Activated CD8-positive, alpha-beta T cell treated with anti-CD3 and anti-CD28 coated beads for 36 hours (primary cell): ENCODE measurements at regions of chr17 and their contacts with region 1.

Region 1: GRCh38 chr17:48024937-48025906 is 12.4 kb downstream of the COPZ2 start:
- DNase-seq: peak; percentile 98
- ATAC-seq: peak; percentile 90
- H3K4me3 Mint-ChIP-seq: peak overlapping the region; percentile 79
- H3K27ac Mint-ChIP-seq: no peak overlapping the region
- H3K4me1 Mint-ChIP-seq: peaks cover 28% of the 10 kb centered on the region
- H3K27me3 Mint-ChIP-seq: peaks cover 29% of the 10 kb centered on the region
- CTCF ChIP-seq: peak; percentile 74

Region 2: GRCh38 chr17:47855737-47856136 is 169.5 kb before region 1 on chr17:
- CTCF ChIA-PET with region 1: no interaction called
- POLR2A ChIA-PET with region 1: no interaction called
- intact Hi-C with region 1: no loop called
- DNase-seq: no peak
- ATAC-seq: no peak
- H3K4me3 Mint-ChIP-seq: no peak overlapping the region
- H3K27ac Mint-ChIP-seq: no peak overlapping the region
- H3K4me1 Mint-ChIP-seq: peaks cover 13% of the 10 kb centered on the region
- H3K27me3 Mint-ChIP-seq: peaks cover 53% of the 10 kb centered on the region
- CTCF ChIP-seq: no peak

Region 3: GRCh38 chr17:48011405-48012150 is 13.6 kb before region 1 on chr17:
- CTCF ChIA-PET with region 1: interaction called, 18 read pairs
- POLR2A ChIA-PET with region 1: no interaction called
- intact Hi-C with region 1: no loop called
- DNase-seq: peak; percentile 68
- ATAC-seq: peak; percentile 88
- H3K4me3 Mint-ChIP-seq: peak overlapping the region; percentile 55
- H3K27ac Mint-ChIP-seq: no peak overlapping the region
- H3K4me1 Mint-ChIP-seq: peaks cover 12% of the 10 kb centered on the region
- H3K27me3 Mint-ChIP-seq: peaks cover 48% of the 10 kb centered on the region
- CTCF ChIP-seq: peak; percentile 62

Region 4: GRCh38 chr17:48047741-48048383 is 22.6 kb after region 1 on chr17 and contains the start of gene NFE2L1:
- CTCF ChIA-PET with region 1: interaction called, 101 read pairs
- POLR2A ChIA-PET with region 1: interaction called, 10 read pairs
- intact Hi-C with region 1: no loop called
- DNase-seq: peak; percentile 100
- ATAC-seq: peak; percentile 97
- H3K4me3 Mint-ChIP-seq: peak within 1 kb of the TSS; percentile 96
- H3K27ac Mint-ChIP-seq: peak within 1 kb of the TSS; percentile 98
- H3K4me1 Mint-ChIP-seq: peaks cover 57% of the 10 kb centered on the region
- H3K27me3 Mint-ChIP-seq: no peaks in the 10 kb centered on the region
- CTCF ChIP-seq: no peak
- total RNA-seq, gene NFE2L1: 88.3 to 90.3 TPM

Region 5: DNA sequence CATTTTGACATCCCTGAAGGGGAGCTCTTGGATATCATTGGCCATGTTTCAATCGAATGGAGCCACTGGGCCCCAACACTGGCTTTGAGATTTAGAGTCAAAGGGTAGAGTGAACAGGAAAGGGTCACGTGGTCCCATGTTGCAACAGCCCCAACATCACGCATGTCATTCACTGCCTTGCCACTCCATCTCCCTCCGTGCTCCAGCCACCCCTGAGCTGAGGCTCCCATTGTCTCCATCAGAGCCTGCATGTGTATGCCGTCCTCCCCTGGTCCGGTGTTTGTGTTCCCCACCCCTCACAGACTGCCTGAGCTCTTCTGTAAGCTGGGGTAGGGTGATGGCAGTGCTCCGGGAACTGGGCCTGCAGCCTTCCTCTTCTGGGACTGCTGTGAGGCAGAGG is 35.0 kb after region 1 on chr17:
- CTCF ChIA-PET with region 1: interaction called, 283 read pairs
- POLR2A ChIA-PET with region 1: no interaction called
- intact Hi-C with region 1: no loop called
- DNase-seq: no peak
- ATAC-seq: no peak
- H3K4me3 Mint-ChIP-seq: no peak overlapping the region
- H3K27ac Mint-ChIP-seq: peak overlapping the region; percentile 64
- H3K4me1 Mint-ChIP-seq: peaks cover 30% of the 10 kb centered on the region
- H3K27me3 Mint-ChIP-seq: no peaks in the 10 kb centered on the region
- CTCF ChIP-seq: no peak

Region 6: DNA sequence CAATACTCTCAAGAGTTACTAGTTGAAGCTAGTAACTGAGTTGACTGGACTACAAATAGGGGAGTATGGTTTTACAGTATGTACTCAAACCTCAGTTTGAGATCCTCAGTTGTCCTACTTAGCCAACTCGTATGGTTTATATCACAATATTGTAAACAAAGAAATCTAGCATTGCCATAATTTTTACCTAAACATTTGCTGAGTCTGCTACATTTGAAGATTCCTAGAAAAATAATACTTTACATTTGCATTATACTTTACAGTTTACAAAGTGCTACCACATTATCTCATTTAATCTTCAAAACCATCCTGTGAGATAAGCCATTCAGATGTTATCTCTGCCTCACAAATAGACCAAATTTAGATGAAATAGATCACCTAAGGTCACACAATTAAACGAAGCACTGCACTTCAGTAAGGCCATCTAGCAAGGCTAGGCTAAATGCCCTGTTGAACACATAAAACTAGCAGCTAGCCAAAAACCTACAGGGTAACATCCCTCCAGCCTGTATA is 59.8 kb after region 1 on chr17:
- CTCF ChIA-PET with region 1: interaction called, 283 read pairs
- POLR2A ChIA-PET with region 1: interaction called, 3 read pairs
- intact Hi-C with region 1: no loop called
- DNase-seq: no peak
- ATAC-seq: no peak
- H3K4me3 Mint-ChIP-seq: no peak overlapping the region
- H3K27ac Mint-ChIP-seq: no peak overlapping the region
- H3K4me1 Mint-ChIP-seq: peaks cover 10% of the 10 kb centered on the region
- H3K27me3 Mint-ChIP-seq: no peaks in the 10 kb centered on the region
- CTCF ChIP-seq: no peak

Region 7: DNA sequence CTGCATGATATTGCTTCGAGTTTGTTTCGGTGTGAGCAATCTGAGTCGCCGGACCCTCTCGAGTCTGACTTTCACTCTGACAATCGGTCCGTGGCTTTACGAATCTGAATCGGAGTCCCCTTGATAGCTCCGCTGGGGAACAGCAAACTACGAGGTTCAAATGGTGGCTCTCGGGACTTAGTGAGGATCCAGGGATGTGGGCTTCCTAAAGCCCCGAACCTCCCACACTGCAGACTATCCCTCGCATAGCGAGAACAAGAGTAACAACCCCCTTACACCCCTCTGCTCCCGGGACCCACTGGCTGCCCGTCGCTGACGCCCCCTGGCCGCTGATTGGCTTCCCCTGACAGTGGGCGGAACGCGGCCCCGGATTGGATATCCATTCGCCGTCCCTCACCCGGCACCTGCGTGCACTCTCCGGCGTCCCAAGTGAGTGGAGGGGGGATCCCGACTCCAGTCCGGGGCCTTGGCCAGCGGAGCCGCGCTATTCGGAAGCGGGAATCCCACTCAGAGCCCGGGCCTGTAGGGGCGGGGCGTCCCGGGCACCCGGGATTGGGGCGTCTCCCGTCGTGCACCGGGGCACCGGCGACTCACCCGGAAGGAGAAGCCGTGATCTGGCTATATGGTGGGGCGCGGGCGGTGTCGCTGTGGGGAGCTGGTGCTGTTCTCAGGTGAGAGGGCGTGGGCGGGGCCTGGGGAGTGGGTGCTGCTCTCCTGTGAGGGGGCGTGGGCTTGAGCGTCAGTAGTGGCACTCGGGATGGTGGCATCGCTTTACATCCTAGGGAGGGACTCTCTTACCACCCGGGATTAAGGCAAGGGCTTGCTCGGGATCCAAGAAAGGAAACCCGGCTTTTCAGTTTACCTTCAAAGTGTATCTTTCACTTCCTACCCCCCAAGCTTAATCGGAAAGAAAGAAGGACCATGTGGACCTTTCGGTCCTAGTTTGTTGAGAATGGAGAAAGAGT is 82.2 kb after region 1 on chr17 and contains the start of gene SNX11:
- CTCF ChIA-PET with region 1: interaction called, 19 read pairs
- POLR2A ChIA-PET with region 1: interaction called, 5 read pairs
- intact Hi-C with region 1: no loop called
- DNase-seq: peak; percentile 95
- ATAC-seq: peak; percentile 88
- H3K4me3 Mint-ChIP-seq: peak within 1 kb of the TSS; percentile 98
- H3K27ac Mint-ChIP-seq: peak within 1 kb of the TSS; percentile 98
- H3K4me1 Mint-ChIP-seq: peaks cover 54% of the 10 kb centered on the region
- H3K27me3 Mint-ChIP-seq: no peaks in the 10 kb centered on the region
- CTCF ChIP-seq: no peak
- total RNA-seq, gene SNX11: 27.2 to 29.5 TPM

Region 8: DNA sequence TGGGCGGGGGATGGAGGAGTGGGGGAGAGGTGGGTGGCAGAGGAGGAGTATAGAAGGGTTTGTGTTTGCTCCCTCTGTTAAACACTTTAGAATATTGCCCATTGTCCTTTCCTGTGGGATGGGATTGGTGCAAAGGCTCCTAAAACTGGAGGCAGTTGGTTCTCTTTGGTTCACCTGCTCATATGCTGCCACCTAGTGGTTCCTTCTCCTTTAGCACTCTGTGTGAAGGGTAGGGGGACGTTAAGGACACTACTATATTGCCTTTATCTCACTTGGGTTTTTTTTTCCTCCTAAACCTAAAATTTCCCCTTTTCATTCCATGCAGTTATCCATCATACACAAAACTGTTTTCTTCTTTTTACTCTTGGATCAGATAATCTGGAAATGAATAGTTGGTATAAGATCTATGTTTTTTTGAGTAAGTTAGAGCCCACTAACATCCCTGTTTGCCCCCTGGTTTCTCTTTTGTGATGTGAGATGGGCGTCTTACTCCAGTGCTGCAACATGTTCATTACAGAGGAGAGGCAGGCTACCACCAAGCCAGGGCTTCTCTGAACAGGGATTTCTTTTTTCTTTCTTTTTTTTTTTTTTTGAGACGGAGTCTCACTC is 106.1 kb after region 1 on chr17:
- CTCF ChIA-PET with region 1: interaction called, 15 read pairs
- POLR2A ChIA-PET with region 1: no interaction called
- intact Hi-C with region 1: loop called (anchors 2 kb)
- DNase-seq: peak; percentile 66
- ATAC-seq: peak; percentile 78
- H3K4me3 Mint-ChIP-seq: no peak overlapping the region
- H3K27ac Mint-ChIP-seq: no peak overlapping the region
- H3K4me1 Mint-ChIP-seq: no peaks in the 10 kb centered on the region
- H3K27me3 Mint-ChIP-seq: no peaks in the 10 kb centered on the region
- CTCF ChIP-seq: peak; percentile 89